WTC11 (cell line): ENCODE measurements at regions of chr20 and their contacts with region 1.

Region 1: DNA sequence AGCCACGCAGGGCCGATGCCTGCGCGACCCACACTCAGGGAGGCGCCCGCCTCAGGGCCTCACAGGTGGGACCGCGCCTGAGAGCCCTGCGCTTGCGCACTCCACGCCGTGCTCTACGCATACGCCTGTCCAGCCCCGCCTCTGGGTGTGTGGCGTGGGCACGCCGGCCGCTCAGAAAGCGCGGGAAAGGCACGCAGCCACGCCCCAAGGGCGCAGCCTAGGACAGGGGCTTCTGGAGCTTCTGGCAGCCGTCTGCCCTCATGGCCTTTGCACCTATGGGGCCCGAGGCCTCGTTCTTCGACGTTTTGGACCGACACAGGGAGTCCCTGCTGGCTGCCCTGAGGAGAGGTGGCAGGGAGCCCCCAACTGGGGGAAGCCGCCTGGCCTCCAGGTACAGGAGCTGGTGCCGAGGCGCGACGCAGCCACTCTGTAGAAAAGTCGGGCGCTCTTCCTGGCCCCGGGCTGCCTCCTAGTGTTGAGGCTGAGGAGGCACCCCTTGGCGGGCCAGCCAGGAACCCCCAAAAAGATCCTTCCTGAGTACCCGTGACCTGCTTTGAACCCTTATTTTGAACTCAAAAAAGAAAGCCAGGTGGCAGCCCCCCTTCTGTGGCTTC is at the start of gene SPO11:
- DNase-seq: peak; percentile 76
- ATAC-seq: peak; percentile 88
- H3K4me3 Mint-ChIP-seq: no peak within 1 kb of the TSS
- H3K27ac Mint-ChIP-seq: no peak within 1 kb of the TSS
- H3K4me1 Mint-ChIP-seq: peaks cover 10% of the 10 kb centered on the region
- H3K27me3 Mint-ChIP-seq: no peaks in the 10 kb centered on the region
- CTCF ChIP-seq: peak; percentile 58
- total RNA-seq, gene SPO11: not detected in 3 replicates

Region 2: DNA sequence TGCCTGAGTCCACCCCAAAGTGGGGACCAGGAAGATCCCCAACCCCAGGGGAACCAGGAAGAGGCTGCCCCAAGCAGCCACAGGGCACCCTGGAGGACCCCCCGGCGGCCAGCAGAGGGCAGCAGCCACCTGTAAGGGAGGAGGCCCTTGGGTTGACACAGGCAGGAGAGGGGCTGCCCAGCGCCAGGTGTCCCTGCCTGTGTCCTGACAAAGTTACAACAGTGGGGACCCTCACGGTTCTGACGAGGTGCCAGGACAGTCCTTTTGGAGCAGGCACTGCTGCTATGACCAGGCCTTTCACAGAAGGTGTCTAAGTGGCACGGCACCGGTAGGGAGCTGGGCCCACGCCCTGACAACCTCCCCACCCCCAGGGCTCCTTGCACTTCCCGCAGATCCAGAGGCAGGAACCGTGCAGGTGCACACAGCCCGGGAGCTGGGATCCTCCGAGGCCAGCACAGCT is 240.0 kb before region 1 on chr20:
- CTCF ChIA-PET with region 1: interaction called, 239 read pairs
- POLR2A ChIA-PET with region 1: no interaction called
- DNase-seq: peak; percentile 94
- ATAC-seq: peak; percentile 87
- H3K4me3 Mint-ChIP-seq: no peak overlapping the region
- H3K27ac Mint-ChIP-seq: no peak overlapping the region; the same call in 1 of the 2 replicates
- H3K4me1 Mint-ChIP-seq: peaks cover 7% of the 10 kb centered on the region
- H3K27me3 Mint-ChIP-seq: peaks cover 21% of the 10 kb centered on the region
- CTCF ChIP-seq: peak; percentile 88

Region 3: GRCh38 chr20:57180406-57181353 is 149.0 kb before region 1 on chr20:
- CTCF ChIA-PET with region 1: interaction called, 18 read pairs
- POLR2A ChIA-PET with region 1: no interaction called
- DNase-seq: no peak
- ATAC-seq: peak; percentile 70
- H3K4me3 Mint-ChIP-seq: no peak overlapping the region
- H3K27ac Mint-ChIP-seq: no peak overlapping the region
- H3K4me1 Mint-ChIP-seq: peaks cover 27% of the 10 kb centered on the region
- H3K27me3 Mint-ChIP-seq: no peaks in the 10 kb centered on the region; the same call in 1 of the 2 replicates
- CTCF ChIP-seq: no peak

Region 4: GRCh38 chr20:57244627-57245214 is 85.0 kb before region 1 on chr20:
- CTCF ChIA-PET with region 1: interaction called, 26 read pairs
- POLR2A ChIA-PET with region 1: no interaction called
- DNase-seq: peak; percentile 63
- ATAC-seq: peak; percentile 95
- H3K4me3 Mint-ChIP-seq: no peak overlapping the region
- H3K27ac Mint-ChIP-seq: peak overlapping the region; percentile 48; the same call in 1 of the 2 replicates
- H3K4me1 Mint-ChIP-seq: peaks cover 15% of the 10 kb centered on the region
- H3K27me3 Mint-ChIP-seq: peaks cover 6% of the 10 kb centered on the region; the same call in 1 of the 2 replicates
- CTCF ChIP-seq: no peak

Region 5: GRCh38 chr20:57342829-57343228 is 13.1 kb after region 1 on chr20:
- CTCF ChIA-PET with region 1: interaction called, 20 read pairs
- POLR2A ChIA-PET with region 1: no interaction called
- DNase-seq: no peak
- ATAC-seq: no peak
- H3K4me3 Mint-ChIP-seq: no peak overlapping the region
- H3K27ac Mint-ChIP-seq: no peak overlapping the region
- H3K4me1 Mint-ChIP-seq: no peaks in the 10 kb centered on the region
- H3K27me3 Mint-ChIP-seq: no peaks in the 10 kb centered on the region; the same call in 1 of the 2 replicates
- CTCF ChIP-seq: no peak